Activated T-helper 1 cell treated with anti-CD3 and anti-CD28 coated beads, Interleukin-12 subunit alpha, Interleukin-12 subunit beta, Interleukin-2, Interleukin-4 antibody, amounts not matched to agents 30 ng/mL and 10 ng/mL and 1 ng/mL, durations not matched to agents 14 hours and 24 hours and 36 hours (primary cell): ENCODE measurements at regions of chr2 and their contacts with region 1.

Region 1: DNA sequence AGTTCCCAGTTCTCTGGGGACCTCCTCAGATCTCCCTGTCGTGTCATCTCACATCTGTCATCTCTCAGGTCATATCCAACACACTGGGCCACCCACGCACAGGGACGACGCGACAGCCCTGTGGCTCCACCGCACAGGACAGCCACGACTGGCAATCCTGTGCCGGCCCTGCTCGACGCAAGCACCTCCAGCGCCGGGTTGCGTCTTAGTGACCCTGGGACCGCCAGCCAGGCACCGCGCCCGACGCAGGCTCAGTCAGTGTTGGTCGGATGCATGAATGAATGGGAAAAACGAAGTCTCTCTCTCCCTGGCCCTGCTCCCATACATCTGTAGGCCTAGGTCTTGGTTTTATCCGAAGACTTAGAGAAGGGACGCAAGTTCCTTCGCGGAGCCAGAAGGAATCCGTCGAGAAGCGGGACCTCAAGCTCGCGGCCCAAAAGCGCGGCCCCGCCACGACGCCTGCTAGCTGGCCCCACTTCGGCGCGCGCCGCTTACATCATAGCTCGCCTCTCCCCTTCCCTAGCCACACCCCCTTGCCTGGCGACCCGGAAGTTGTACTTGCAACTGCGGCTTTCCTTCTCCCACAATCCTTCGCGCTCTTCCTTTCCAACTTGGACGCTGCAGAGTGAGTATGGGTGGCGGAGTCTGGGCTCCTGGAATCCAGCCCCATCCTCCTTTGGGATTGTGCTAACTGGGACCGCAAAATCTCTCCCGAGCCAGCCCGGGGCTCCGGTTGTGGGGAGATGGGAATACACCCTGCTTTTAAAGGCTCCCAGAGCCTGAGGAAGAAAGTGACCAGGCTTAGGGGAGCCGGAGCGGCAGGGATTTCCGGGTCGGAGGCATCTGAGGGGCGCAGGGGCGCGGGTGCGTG is at the start of gene RPL31:
- DNase-seq: peak; percentile 95
- H3K4me3 Mint-ChIP-seq: peak within 1 kb of the TSS; percentile 100
- H3K27ac Mint-ChIP-seq: peak within 1 kb of the TSS; percentile 95
- H3K4me1 Mint-ChIP-seq: peaks cover 46% of the 10 kb centered on the region
- H3K27me3 Mint-ChIP-seq: peaks cover 6% of the 10 kb centered on the region
- total RNA-seq, gene RPL31: 1,048 and 1,092 TPM in 2 replicates

Region 2: DNA sequence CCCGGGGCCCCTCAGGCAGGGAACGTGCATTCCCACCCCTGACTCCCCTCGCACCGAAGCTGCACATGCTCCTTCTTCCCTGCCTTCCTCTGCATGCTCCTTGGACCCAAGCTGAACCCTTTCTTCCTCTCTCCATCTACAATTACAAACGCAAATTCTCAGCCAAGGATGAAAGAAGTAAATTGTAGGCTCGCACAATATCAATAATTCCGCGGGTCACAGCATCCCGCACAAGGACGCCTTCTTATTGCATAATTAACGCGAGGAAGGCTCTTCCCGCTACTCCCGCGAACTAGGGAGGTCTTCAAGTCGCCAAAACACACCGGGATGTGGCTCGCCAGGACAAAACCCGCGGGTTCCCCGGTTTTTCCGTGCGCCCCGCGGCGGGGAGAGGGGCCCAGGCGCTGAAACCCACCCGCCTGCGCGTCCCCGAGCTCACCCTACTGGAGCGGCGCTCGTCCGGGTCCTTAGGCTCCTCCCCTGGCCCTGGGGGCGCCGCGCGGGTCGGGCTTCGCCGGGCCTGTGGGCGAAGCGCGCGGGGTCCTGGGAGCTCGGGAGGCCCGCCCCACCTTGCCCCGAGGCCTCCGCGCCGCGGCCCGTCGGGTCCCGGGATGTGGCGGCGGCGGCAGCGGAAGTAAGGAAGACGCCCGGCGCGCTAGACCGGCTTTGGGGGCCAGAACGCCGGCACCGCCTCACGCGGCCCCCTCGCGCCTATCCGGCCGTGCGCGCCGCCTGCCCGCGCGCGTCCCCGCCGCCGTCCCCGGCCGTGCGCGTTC is 584.8 kb before region 1 on chr2 and contains the start of gene CHST10:
- intact Hi-C with region 1: loop called (anchors 1 kb)
- DNase-seq: peak; percentile 44
- H3K4me3 Mint-ChIP-seq: peak within 1 kb of the TSS; percentile 88
- H3K27ac Mint-ChIP-seq: peak within 1 kb of the TSS; percentile 66
- H3K4me1 Mint-ChIP-seq: peaks cover 13% of the 10 kb centered on the region
- H3K27me3 Mint-ChIP-seq: peaks cover 18% of the 10 kb centered on the region
- total RNA-seq, gene CHST10: 7.4 and 7.8 TPM in 2 replicates

Region 3: DNA sequence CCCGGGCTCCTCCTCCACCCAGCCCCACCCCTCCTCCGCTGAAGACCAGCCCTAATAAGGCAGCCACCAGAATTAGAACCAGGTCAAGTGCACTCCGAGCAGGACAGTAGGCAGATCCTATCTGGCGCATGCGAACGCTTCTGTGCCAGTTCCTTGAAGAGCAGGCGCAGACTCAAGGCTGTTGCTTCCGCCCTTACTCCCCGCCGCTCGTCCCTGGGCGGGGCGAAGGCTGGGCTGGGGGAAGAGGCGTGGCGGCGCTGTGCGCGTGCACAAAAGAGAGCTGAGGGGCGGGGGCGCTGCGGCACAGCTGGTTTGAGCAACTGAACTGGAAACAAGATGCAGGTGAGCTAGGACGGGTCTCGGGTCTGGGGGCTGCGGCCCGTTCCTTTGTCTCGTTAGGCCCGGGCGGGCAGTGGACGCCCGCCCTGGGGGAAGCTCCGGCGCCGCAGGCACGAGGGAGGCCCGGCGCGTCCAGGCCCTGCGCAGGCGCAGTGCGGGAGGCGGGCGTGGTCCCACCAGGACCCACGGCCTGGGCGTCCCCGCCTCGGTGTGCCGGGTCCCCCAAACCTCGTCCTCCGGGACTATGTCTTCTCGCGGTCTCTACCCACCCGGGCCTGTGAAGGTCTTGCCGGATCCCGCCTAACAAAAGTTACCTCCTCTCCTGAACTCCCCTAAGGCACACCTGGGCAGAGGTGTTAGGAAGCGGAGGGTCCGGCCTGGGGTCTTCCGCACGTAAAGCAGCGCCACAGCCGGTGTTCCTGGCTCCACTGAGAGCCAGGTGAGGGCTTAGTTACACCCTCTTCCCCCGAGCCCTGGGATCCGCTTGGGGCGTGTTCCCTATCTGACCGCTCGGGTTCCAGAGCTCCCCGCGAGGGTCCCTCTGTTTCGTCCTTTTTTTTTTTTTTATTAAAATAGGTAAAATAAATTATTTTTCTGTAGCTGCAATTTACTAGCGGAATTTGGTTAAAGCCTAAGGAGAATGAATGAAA is 438.9 kb before region 1 on chr2 and contains the start of gene PDCL3:
- intact Hi-C with region 1: loop called (anchors 1 kb)
- DNase-seq: peak; percentile 93
- H3K4me3 Mint-ChIP-seq: peak within 1 kb of the TSS; percentile 97
- H3K27ac Mint-ChIP-seq: peak within 1 kb of the TSS; percentile 99
- H3K4me1 Mint-ChIP-seq: peaks cover 52% of the 10 kb centered on the region
- H3K27me3 Mint-ChIP-seq: no peaks in the 10 kb centered on the region
- total RNA-seq, gene PDCL3: 39.2 and 45.5 TPM in 2 replicates

Region 4: GRCh38 chr2:101012706-101013181 is 10.8 kb after region 1 on chr2:
- intact Hi-C with region 1: loop called (anchors 1 kb)
- DNase-seq: peak; percentile 19
- H3K4me3 Mint-ChIP-seq: no peak overlapping the region
- H3K27ac Mint-ChIP-seq: peak overlapping the region; percentile 41
- H3K4me1 Mint-ChIP-seq: peaks cover 36% of the 10 kb centered on the region
- H3K27me3 Mint-ChIP-seq: no peaks in the 10 kb centered on the region

Region 5: GRCh38 chr2:101151141-101151858 is 149.4 kb after region 1 on chr2 and contains the start of gene TBC1D8:
- intact Hi-C with region 1: loop called (anchors 2 kb)
- DNase-seq: peak; percentile 63
- H3K4me3 Mint-ChIP-seq: peak within 1 kb of the TSS; percentile 75
- H3K27ac Mint-ChIP-seq: no peak within 1 kb of the TSS
- H3K4me1 Mint-ChIP-seq: peaks cover 11% of the 10 kb centered on the region
- H3K27me3 Mint-ChIP-seq: peaks cover 60% of the 10 kb centered on the region
- total RNA-seq, gene TBC1D8: 0.91 and 1.1 TPM in 2 replicates

Region 6: DNA sequence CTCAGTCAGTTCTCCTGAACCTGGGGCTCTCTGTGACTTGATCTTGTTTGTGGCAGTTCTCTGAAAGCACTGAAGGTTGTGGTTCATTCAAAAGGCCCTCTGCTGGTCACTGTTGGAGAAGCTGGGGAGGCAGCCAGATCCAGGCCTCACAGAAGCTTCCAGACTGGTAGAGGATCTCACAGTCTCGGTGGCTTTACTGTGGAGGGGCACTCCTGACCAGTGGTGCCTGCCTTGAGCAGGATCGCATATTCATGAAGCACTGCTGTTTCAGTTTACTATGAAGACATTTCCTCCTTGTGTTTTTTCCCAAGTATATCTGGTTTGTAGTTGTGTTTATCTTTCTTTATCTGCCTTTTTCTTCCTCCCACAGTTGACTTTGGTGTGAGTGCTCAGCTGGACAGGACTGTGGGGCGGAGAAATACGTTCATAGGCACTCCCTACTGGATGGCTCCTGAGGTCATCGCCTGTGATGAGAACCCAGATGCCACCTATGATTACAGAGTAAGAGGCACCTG is 829.5 kb after region 1 on chr2:
- intact Hi-C with region 1: loop called (anchors 10 kb)
- DNase-seq: peak; percentile 46
- H3K4me3 Mint-ChIP-seq: peak overlapping the region; percentile 32
- H3K27ac Mint-ChIP-seq: peak overlapping the region; percentile 92
- H3K4me1 Mint-ChIP-seq: peaks cover 54% of the 10 kb centered on the region
- H3K27me3 Mint-ChIP-seq: no peaks in the 10 kb centered on the region